AG04450 (cell line): ENCODE measurements at regions of chr2 and their contacts with region 1.

Region 1: DNA sequence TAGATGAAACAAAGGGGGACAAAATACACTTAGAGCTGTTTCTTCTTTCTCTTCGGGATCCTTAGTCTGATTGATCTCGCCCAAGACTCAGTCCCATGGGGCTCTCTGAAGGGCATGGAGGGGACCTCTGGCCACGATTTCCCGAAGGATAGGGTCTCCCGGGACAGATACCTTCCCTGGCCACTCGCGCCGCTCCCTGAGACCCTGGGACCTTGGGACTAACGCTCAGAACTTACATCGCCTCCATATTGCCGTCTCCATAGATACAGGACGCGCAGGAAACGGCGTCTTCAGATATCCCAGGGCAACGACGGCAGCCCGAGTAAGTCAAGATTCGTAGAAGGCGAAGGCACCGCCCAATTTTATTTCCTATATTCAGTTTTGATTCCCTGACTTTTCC is at the start of gene CFAP65:
- DNase-seq: peak; percentile 20
- H3K4me3 ChIP-seq: peak within 1 kb of the TSS; percentile 64
- H3K27ac ChIP-seq: no peak within 1 kb of the TSS
- H3K27me3 ChIP-seq: peaks cover 26% of the 10 kb centered on the region
- CTCF ChIP-seq: no peak
- polyA plus RNA-seq, gene CFAP65: not detected in 2 replicates

Region 2: DNA sequence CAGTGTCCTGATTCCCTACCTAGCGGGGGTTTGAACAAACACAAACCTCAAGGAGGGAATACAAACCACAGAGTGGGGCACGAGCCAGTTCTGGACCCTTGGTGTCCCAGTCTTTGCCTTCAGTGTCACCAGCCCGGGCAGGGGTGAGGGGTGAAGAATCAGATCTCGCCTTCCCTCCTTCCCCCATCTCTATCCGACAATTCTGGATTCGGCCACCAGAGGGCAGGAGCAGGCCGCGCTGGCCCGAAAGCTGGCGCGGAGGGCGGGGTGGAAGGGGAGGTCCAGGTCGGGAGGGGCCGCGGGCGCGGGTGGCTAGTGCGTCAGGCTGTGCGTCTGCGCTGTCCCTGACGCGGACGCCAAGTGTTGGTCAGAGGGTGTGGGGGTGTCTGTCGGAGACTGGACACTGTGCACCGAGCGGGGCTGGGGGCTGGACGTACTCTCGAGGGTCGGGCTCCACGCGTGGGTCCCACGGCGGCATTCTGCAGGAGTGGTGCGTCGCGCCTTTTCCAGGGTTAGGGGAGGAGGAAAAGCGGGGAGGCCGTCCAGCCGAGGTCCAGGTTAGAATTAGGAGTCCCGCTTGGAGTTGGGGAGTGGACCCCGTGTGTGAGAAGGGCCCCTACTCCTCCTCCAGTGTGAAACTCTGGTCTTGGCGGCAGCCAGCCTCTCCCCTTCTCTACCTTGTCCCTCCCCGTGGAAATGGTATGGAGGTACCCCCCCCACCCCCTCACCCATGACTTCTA is 45.1 kb before region 1 on chr2:
- CTCF ChIA-PET with region 1: interaction called, 13 read pairs
- POLR2A ChIA-PET with region 1: no interaction called
- DNase-seq: peak; percentile 27
- H3K4me3 ChIP-seq: peak overlapping the region; percentile 52
- H3K27ac ChIP-seq: no peak overlapping the region
- H3K27me3 ChIP-seq: peaks cover 82% of the 10 kb centered on the region
- CTCF ChIP-seq: peak; percentile 89